GM12878 (cell line): ENCODE measurements at regions of chr13 and their contacts with region 1.

Region 1: GRCh38 chr13:77429320-77430142 is 102.6 kb upstream of the MYCBP2 start:
- DNase-seq: peak; percentile 93
- ATAC-seq: peak; percentile 63
- H3K4me3 ChIP-seq: peak overlapping the region; percentile 47
- H3K27ac ChIP-seq: peak overlapping the region; percentile 85
- H3K4me1 ChIP-seq: peaks cover 26% of the 10 kb centered on the region
- H3K27me3 ChIP-seq: no peaks in the 10 kb centered on the region
- CTCF ChIP-seq: no peak
- EP300 ChIP-seq: peak; percentile 64 to 73; a peak in 3 of 4 replicates
- POLR2A ChIP-seq: no peak
- RAD21 ChIP-seq: peak; percentile 21; the same call in 1 of the 2 replicates

Region 2: GRCh38 chr13:77065461-77066147 is 363.9 kb before region 1 on chr13:
- CTCF ChIA-PET with region 1: no interaction called
- POLR2A ChIA-PET with region 1: no interaction called
- RAD21 ChIA-PET with region 1: no interaction called
- SMC1A ChIA-PET with region 1: no interaction called
- in situ Hi-C with region 1: no loop called
- intact Hi-C with region 1: no loop called
- DNase-seq: no peak
- ATAC-seq: no peak
- H3K4me3 ChIP-seq: no peak overlapping the region
- H3K27ac ChIP-seq: no peak overlapping the region; the same call in 1 of the 2 replicates
- H3K4me1 ChIP-seq: no peaks in the 10 kb centered on the region
- H3K27me3 ChIP-seq: no peaks in the 10 kb centered on the region
- CTCF ChIP-seq: no peak
- EP300 ChIP-seq: no peak
- POLR2A ChIP-seq: no peak
- RAD21 ChIP-seq: no peak

Region 3: DNA sequence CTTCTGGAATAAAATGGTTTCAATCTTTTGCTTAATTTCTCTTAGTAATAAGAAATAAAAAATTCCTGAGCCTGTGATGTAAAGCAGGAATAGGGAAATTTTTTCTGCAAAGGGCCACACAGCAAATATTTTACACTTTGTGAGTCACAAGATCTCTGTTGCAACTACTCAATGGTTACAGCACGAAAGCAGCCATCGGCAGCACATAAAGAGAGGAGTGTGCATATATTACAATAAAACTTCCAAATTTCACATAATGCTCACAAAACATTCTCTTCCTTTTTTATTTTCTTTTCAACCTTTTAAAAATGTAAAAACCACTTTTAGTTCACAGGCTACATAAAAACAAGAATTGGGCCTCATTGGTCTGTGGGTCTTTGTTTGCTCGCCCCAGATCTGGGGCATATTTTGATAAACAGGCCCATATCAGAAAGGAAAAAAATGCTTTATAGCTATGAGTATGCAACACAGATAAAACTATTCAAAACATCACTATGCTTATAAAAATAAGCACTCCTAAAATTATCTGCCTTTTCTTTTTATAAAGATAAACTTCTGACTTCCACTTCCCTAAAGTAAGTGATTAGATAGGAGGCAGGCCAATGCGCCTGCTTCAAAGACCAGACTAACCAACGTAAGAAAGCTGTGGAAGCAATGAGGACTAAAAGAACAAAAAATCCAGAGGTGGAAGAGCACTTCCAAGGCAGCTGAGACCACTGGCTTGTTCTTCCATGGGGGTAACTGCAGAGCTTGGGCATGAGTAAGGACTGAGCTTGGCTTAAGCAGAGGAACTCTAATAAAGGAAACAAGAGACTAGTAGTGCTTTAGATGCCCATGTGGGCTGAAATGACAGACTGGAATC is 129.1 kb before region 1 on chr13:
- CTCF ChIA-PET with region 1: interaction called, 5 read pairs
- POLR2A ChIA-PET with region 1: interaction called, 3 read pairs
- RAD21 ChIA-PET with region 1: interaction called, 15 read pairs
- SMC1A ChIA-PET with region 1: interaction called, 7 read pairs
- in situ Hi-C with region 1: no loop called
- intact Hi-C with region 1: no loop called
- DNase-seq: no peak
- ATAC-seq: peak; percentile 52
- H3K4me3 ChIP-seq: peak overlapping the region; percentile 30; the same call in 1 of the 2 replicates
- H3K27ac ChIP-seq: peak overlapping the region; percentile 80
- H3K4me1 ChIP-seq: peaks cover 28% of the 10 kb centered on the region
- H3K27me3 ChIP-seq: no peaks in the 10 kb centered on the region
- CTCF ChIP-seq: no peak
- EP300 ChIP-seq: no peak
- POLR2A ChIP-seq: no peak
- RAD21 ChIP-seq: no peak

Region 4: GRCh38 chr13:77338961-77339401 is 90.5 kb before region 1 on chr13:
- CTCF ChIA-PET with region 1: interaction called, 7 read pairs
- POLR2A ChIA-PET with region 1: interaction called, 36 read pairs
- RAD21 ChIA-PET with region 1: interaction called, 33 read pairs
- SMC1A ChIA-PET with region 1: interaction called, 31 read pairs
- in situ Hi-C with region 1: loop called (anchors 5 kb)
- intact Hi-C with region 1: loop called (anchors 1 kb)
- DNase-seq: no peak
- ATAC-seq: peak; percentile 78
- H3K4me3 ChIP-seq: peak overlapping the region; percentile 45
- H3K27ac ChIP-seq: peak overlapping the region; percentile 89
- H3K4me1 ChIP-seq: peaks cover 37% of the 10 kb centered on the region
- H3K27me3 ChIP-seq: no peaks in the 10 kb centered on the region
- CTCF ChIP-seq: no peak
- EP300 ChIP-seq: no peak
- POLR2A ChIP-seq: 0 out of 2 replicates have a peak, but pooled peaks have one; percentile 41
- RAD21 ChIP-seq: peak; percentile 28; the same call in 1 of the 2 replicates

Region 5: GRCh38 chr13:77351315-77351714 is 78.2 kb before region 1 on chr13:
- CTCF ChIA-PET with region 1: interaction called, 3 read pairs
- POLR2A ChIA-PET with region 1: interaction called, 9 read pairs
- RAD21 ChIA-PET with region 1: interaction called, 11 read pairs
- SMC1A ChIA-PET with region 1: interaction called, 41 read pairs
- in situ Hi-C with region 1: no loop called
- intact Hi-C with region 1: no loop called
- DNase-seq: no peak
- ATAC-seq: no peak
- H3K4me3 ChIP-seq: no peak overlapping the region
- H3K27ac ChIP-seq: no peak overlapping the region
- H3K4me1 ChIP-seq: no peaks in the 10 kb centered on the region
- H3K27me3 ChIP-seq: no peaks in the 10 kb centered on the region
- CTCF ChIP-seq: no peak
- EP300 ChIP-seq: no peak
- POLR2A ChIP-seq: no peak
- RAD21 ChIP-seq: no peak

Region 6: GRCh38 chr13:77415253-77416071 is 14.1 kb before region 1 on chr13:
- CTCF ChIA-PET with region 1: interaction called, 36 read pairs
- POLR2A ChIA-PET with region 1: interaction called, 50 read pairs
- RAD21 ChIA-PET with region 1: interaction called, 52 read pairs
- SMC1A ChIA-PET with region 1: interaction called, 130 read pairs
- in situ Hi-C with region 1: no loop called
- intact Hi-C with region 1: loop called (anchors 2 kb)
- DNase-seq: peak; percentile 45
- ATAC-seq: peak; percentile 93
- H3K4me3 ChIP-seq: no peak overlapping the region
- H3K27ac ChIP-seq: peak overlapping the region; percentile 26; the same call in 1 of the 2 replicates
- H3K4me1 ChIP-seq: peaks cover 10% of the 10 kb centered on the region
- H3K27me3 ChIP-seq: no peaks in the 10 kb centered on the region
- CTCF ChIP-seq: no peak
- EP300 ChIP-seq: no peak
- POLR2A ChIP-seq: 0 out of 2 replicates have a peak, but pooled peaks have one; percentile 32
- RAD21 ChIP-seq: 0 out of 2 replicates have a peak, but pooled peaks have one; percentile 17